Heart right ventricle (tissue), 16 donors: ENCODE measurements at regions of chr9 and their contacts with region 1.

Region 1: GRCh38 chr9:112472996-112473395 is 13.6 kb upstream of the KIAA1958 start:
- DNase-seq: no peak
- ATAC-seq: no peak
- H3K4me3 ChIP-seq: no peak overlapping the region
- H3K27ac ChIP-seq: no peak overlapping the region
- H3K4me1 ChIP-seq: peaks cover 0 to 6% (median 0%) of the 10 kb centered on the region in 9 donors
- H3K27me3 ChIP-seq: no peaks in the 10 kb centered on the region
- CTCF ChIP-seq: no peak

Region 2: GRCh38 chr9:112508377-112508776 is 35.4 kb after region 1 on chr9:
- intact Hi-C with region 1: no loop called
- DNase-seq: no peak
- ATAC-seq: no peak
- H3K4me3 ChIP-seq: no peak overlapping the region
- H3K27ac ChIP-seq: no peak overlapping the region
- H3K4me1 ChIP-seq: peaks cover 0 to 7% (median 0%) of the 10 kb centered on the region in 9 donors
- H3K27me3 ChIP-seq: no peaks in the 10 kb centered on the region
- CTCF ChIP-seq: no peak

Region 3: GRCh38 chr9:112700085-112700484 is 227.1 kb after region 1 on chr9:
- intact Hi-C with region 1: loop called in 3 of 10 experiments (anchors 5 to 10 kb)
- DNase-seq: no peak
- ATAC-seq: no peak
- H3K4me3 ChIP-seq: no peak overlapping the region
- H3K27ac ChIP-seq: no peak overlapping the region
- H3K4me1 ChIP-seq: no peaks in the 10 kb centered on the region
- H3K27me3 ChIP-seq: no peaks in the 10 kb centered on the region
- CTCF ChIP-seq: no peak